ENCODE measurements at regions of chr1 and their contacts with region 1.

Region 1: GRCh38 chr1:114282751-114283403 is 129.2 kb upstream of the SYT6 start:
- H3K4me3 ChIP-seq: no peak overlapping the region
- H3K27ac ChIP-seq: no peak overlapping the region
- H3K4me1 ChIP-seq: no peaks in the 10 kb centered on the region
- CTCF ChIP-seq: peak; percentile 69

Region 2: DNA sequence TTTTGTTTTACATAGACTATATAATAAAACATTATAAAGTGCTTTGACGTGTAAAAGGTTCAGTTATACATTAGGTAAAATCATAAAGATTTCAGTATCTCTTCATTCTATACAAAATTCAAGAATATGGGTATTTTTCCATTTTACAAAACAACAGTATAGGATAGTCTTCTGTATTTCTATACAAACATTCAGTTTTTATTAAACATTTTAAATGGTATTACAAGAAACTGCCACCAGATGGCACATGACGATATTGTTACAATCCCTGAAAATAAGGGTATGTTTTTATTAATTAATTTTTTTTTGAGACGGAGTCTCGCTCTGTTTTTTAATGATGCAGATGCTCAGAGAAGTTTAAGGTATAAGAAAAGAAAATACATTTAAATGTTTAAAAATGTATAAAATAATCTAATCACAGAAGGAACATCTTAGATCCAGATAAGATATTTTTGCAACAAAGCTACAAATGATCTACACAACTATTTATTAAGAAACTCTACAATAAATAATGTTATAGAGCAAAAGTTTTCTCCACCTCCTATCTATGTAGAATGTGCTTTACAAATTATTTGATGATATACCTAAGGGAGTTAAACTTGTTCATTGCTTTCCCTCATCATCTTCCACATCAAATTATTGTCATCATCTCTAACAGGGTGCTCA is 447.1 kb before region 1 on chr1:
- CTCF ChIA-PET with region 1: interaction called, 19 read pairs
- POLR2A ChIA-PET with region 1: no interaction called
- H3K4me3 ChIP-seq: no peak overlapping the region
- H3K27ac ChIP-seq: no peak overlapping the region
- H3K4me1 ChIP-seq: no peaks in the 10 kb centered on the region
- CTCF ChIP-seq: no peak

Region 3: DNA sequence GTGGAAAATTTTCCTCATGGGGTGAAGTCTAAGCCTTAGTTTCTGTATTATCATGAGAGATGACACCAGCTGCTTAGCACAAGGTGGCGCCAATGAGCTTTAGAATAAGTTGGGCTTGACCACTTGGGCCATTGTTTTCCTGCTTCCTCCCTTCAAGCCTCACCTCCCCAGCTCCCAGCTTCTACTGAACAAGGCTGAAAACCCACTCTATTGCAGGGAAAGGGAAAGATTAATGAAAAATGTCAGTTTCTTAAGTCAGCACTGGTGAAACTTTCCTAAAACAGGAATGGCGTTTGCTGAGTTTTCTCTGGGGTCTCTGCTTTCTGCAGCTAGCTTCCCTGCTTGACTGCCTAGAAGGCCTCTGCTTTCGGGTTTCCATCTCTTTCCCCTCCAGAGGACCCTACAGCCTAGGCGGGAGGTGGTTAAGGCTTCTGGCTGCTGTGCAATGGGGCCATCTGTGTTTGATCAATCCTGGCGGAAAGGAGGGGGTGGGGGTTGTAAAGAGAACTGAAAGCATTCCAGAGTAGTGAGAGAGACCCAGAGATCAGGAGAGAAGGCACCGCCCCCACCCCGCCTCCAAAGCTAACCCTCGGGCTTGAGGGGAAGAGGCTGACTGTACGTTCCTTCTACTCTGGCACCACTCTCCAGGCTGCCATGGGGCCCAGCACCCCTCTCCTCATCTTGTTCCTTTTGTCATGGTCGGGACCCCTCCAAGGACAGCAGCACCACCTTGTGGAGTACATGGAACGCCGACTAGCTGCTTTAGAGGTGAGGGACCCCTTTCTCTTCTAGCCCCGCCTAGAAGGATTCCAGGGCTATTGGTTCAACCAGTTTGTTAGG is 303.8 kb before region 1 on chr1 and contains the start of gene OLFML3:
- CTCF ChIA-PET with region 1: interaction called, 99 read pairs
- POLR2A ChIA-PET with region 1: interaction called, 5 read pairs
- H3K4me3 ChIP-seq: no peak within 1 kb of the TSS
- H3K27ac ChIP-seq: no peak within 1 kb of the TSS; the same call in 1 of the 2 replicates
- H3K4me1 ChIP-seq: peaks cover 5% of the 10 kb centered on the region; the same call in 1 of the 2 replicates
- CTCF ChIP-seq: peak; percentile 72

Region 4: DNA sequence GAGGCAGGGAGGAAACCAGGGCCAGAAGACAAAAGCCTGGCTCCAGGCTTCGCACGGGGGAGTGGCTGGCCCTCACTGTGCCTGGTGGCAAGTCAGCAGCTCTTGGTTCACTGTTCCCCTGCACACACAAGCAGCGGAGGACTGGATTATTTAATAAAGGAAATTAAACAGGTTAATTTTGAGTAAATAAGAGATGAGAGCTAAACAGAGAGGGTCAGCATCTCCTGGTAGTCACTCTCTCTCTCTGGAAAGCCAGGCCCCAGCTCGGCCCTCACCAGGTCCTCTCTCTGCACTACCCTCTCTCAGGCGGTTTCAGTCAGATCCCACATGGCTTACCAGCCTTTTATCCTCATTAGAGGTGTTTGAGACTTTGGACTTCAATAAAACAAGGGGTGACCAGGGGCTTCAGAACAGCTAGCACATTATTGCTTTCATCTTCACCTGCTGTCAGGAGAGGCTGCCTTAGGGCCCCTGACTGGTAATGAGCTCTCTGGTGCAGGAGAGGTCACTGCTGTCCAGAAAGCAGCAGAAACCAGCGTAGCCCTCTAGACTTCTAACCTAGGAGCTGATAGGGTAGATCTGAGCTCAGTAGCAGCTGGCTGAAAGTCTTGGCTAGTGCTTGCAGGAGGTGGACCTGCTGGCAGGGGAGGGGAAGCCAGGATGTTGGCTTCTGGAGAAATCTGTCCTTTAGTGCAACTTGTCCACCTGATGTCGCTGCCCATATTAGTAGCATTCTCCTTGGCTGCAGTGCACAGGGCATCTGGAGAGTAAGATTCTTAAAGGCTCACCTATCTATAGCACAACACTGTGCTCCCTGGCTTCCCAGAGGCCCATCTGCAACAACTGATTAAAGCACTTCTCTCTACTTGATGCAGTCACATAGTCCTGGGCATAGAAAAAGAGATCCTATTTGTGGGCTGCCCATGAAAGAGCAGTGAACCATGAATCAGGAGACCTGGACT is 175.1 kb before region 1 on chr1:
- CTCF ChIA-PET with region 1: interaction called, 11 read pairs
- POLR2A ChIA-PET with region 1: no interaction called
- H3K4me3 ChIP-seq: no peak overlapping the region
- H3K27ac ChIP-seq: no peak overlapping the region
- H3K4me1 ChIP-seq: no peaks in the 10 kb centered on the region
- CTCF ChIP-seq: no peak

Region 5: GRCh38 chr1:114263343-114263742 is 19.5 kb before region 1 on chr1:
- CTCF ChIA-PET with region 1: interaction called, 19 read pairs
- POLR2A ChIA-PET with region 1: no interaction called
- H3K4me3 ChIP-seq: no peak overlapping the region
- H3K27ac ChIP-seq: no peak overlapping the region
- H3K4me1 ChIP-seq: no peaks in the 10 kb centered on the region
- CTCF ChIP-seq: no peak

Region 6: GRCh38 chr1:114298008-114298407 is 15.1 kb after region 1 on chr1:
- CTCF ChIA-PET with region 1: interaction called, 15 read pairs
- POLR2A ChIA-PET with region 1: no interaction called
- H3K4me3 ChIP-seq: no peak overlapping the region
- H3K27ac ChIP-seq: no peak overlapping the region
- H3K4me1 ChIP-seq: no peaks in the 10 kb centered on the region
- CTCF ChIP-seq: no peak

Region 7: GRCh38 chr1:114368560-114369246 is 85.8 kb after region 1 on chr1:
- CTCF ChIA-PET with region 1: no interaction called
- POLR2A ChIA-PET with region 1: no interaction called
- H3K4me3 ChIP-seq: no peak overlapping the region
- H3K27ac ChIP-seq: no peak overlapping the region
- H3K4me1 ChIP-seq: no peaks in the 10 kb centered on the region
- CTCF ChIP-seq: no peak

Region 8: DNA sequence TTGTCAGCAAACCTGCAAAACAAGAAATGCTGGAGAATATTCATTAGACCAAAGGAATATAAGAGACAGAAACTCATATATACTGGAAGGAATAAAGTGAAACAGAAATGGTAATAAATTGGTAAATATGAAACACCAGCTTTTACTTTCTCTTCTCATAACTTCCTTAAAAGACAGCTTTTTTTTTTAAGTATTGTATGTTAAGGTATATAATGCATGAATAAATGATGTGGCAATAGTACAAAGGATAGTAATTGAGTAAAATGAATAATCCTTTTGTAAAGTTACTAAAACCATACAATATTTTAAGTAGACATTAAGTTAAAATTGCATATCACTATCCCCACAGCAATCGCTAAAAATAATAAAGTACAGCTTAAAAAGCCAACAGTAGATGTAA is 163.3 kb after region 1 on chr1:
- CTCF ChIA-PET with region 1: no interaction called
- POLR2A ChIA-PET with region 1: no interaction called
- H3K4me3 ChIP-seq: no peak overlapping the region
- H3K27ac ChIP-seq: no peak overlapping the region
- H3K4me1 ChIP-seq: no peaks in the 10 kb centered on the region
- CTCF ChIP-seq: no peak

Measured in HEK293 (cell line).